ENCODE measurements at regions of chr15 and their contacts with region 1.

Region 1: GRCh38 chr15:101070502-101071273 is 151.5 kb downstream of the LRRK1 start:
- DNase-seq: peak; percentile 33
- H3K4me3 Mint-ChIP-seq: peak overlapping the region; percentile 31
- H3K27ac Mint-ChIP-seq: peak overlapping the region; percentile 92
- H3K4me1 Mint-ChIP-seq: peaks cover 13% of the 10 kb centered on the region
- H3K27me3 Mint-ChIP-seq: no peaks in the 10 kb centered on the region
- CTCF ChIP-seq: no peak

Region 2: GRCh38 chr15:100448492-100448891 is 622.2 kb before region 1 on chr15:
- CTCF ChIA-PET with region 1: no interaction called
- intact Hi-C with region 1: loop called (anchors 10 kb)
- DNase-seq: no peak
- H3K4me3 Mint-ChIP-seq: no peak overlapping the region
- H3K27ac Mint-ChIP-seq: no peak overlapping the region
- H3K4me1 Mint-ChIP-seq: no peaks in the 10 kb centered on the region
- H3K27me3 Mint-ChIP-seq: peaks cover 15% of the 10 kb centered on the region
- CTCF ChIP-seq: no peak

Region 3: GRCh38 chr15:101086394-101087171 is 15.9 kb after region 1 on chr15:
- CTCF ChIA-PET with region 1: no interaction called
- intact Hi-C with region 1: no loop called
- DNase-seq: no peak
- H3K4me3 Mint-ChIP-seq: no peak overlapping the region
- H3K27ac Mint-ChIP-seq: no peak overlapping the region
- H3K4me1 Mint-ChIP-seq: no peaks in the 10 kb centered on the region
- H3K27me3 Mint-ChIP-seq: peaks cover 28% of the 10 kb centered on the region
- CTCF ChIP-seq: no peak

Measured in Calu3 (cell line).